ENCODE measurements at regions of chr1 and their contacts with region 1.

Region 1: GRCh38 chr1:212814537-212815334 is 23.0 kb downstream of the TATDN3 start:
- DNase-seq: no peak
- ATAC-seq: peak in 3 of 4 donors; percentile 43 to 91 (median 80)
- H3K4me3 ChIP-seq: no peak overlapping the region
- H3K27ac ChIP-seq: no peak overlapping the region
- H3K4me1 ChIP-seq: no peaks in the 10 kb centered on the region
- H3K27me3 ChIP-seq: no peaks in the 10 kb centered on the region
- CTCF ChIP-seq: peak in 1 of 4 donors; percentile 12

Region 2: GRCh38 chr1:212951126-212951946 is 136.6 kb after region 1 on chr1:
- intact Hi-C with region 1: no loop called
- DNase-seq: peak in 3 of 6 donors; percentile 20 to 62 (median 60)
- ATAC-seq: peak in 2 of 4 donors; percentile 19 to 25
- H3K4me3 ChIP-seq: peak overlapping the region; percentile 14 to 63 (median 31)
- H3K27ac ChIP-seq: no peak overlapping the region
- H3K4me1 ChIP-seq: no peaks in the 10 kb centered on the region
- H3K27me3 ChIP-seq: no peaks in the 10 kb centered on the region
- CTCF ChIP-seq: no peak

Region 3: GRCh38 chr1:212990276-212990675 is 175.5 kb after region 1 on chr1:
- intact Hi-C with region 1: loop called in 1 of 3 experiments (anchors 10 kb)
- DNase-seq: no peak
- ATAC-seq: no peak
- H3K4me3 ChIP-seq: no peak overlapping the region
- H3K27ac ChIP-seq: no peak overlapping the region
- H3K4me1 ChIP-seq: no peaks in the 10 kb centered on the region
- H3K27me3 ChIP-seq: no peaks in the 10 kb centered on the region
- CTCF ChIP-seq: no peak

Measured in pancreas (tissue), 10 donors.